ENCODE measurements at regions of chr19 and their contacts with region 1.

Region 1: DNA sequence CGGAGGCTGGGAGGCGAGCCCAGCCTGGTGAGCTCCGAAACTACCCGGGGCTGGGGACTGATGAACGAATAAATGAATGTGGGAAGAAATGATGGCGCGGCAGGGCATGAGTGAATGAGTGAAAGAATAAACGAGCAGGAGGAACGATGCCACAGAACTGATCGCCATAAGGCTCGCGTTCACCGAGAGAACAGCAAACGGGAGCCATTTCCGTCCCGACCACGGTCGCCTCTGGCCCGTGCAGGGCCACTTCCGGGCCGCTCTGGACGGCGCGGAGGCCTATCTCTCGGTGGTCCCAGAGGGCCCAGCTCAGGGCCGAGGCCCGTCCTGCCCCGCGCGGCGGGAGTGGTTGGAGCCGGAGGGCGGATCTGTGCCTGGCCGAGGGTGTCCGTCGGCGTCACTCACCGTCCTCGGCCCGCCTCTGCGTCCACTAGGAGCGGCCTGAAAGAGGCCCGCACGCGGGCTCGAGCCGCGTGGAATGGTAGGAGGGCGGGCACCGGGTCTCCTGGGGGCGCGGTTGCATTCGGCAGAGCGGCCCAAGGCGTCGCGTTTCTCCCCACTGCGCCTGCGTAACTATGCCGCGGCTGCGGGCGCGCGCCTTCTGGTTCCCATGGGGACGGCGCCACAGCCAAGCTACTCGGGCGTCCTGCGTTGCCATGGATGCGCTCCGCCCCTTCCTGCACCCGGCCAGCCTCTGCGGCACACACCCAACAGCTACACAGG is at the start of gene ZNF497:
- H3K4me3 ChIP-seq: peak within 1 kb of the TSS; percentile 96
- H3K27ac ChIP-seq: peak within 1 kb of the TSS; percentile 85
- H3K4me1 ChIP-seq: no peaks in the 10 kb centered on the region
- CTCF ChIP-seq: peak; percentile 78

Region 2: DNA sequence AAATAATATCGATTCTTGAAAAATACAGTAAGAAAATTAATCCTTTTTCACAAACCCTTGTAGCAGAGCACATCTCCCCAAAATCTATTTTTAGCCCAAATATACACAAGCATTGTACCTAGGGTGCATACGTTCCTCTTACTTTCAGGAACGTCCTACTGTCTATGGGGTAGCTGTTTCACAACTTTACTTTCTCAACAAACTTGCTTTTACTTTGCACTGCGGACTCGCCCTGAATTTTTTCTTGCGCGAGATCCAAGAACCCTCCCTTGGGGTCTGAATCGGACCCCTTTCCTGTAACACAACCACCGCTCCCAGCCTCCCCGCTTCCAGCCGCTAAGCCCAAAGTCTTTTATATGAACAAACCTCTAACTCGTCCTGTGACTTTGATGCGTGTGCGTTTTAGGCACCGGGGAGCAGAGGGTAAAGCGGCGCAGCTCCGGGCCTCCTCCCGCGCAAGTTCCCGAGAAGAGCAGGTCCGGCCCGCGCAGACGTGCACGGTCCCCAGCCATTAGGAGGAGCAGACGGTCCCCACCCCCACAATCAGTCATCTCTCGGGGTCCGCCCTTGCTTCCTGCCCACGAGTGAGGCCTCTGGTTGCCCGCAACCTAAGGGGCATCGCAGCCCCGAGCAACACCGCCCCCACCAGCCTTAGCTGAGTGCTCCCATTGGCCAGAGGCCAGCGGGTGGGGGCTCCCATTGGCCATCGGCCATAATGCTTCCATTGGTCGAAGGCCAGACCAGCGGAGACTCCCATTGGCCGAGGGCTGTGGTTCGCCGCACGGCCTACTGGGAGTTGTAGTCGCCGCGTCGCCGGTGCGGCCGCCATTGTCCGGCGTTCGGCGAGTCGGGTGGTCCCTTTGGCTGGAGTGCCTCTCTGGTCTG is 84.0 kb before region 1 on chr19 and contains the start of gene ZNF8:
- CTCF ChIA-PET with region 1: no interaction called
- POLR2A ChIA-PET with region 1: interaction called, 13 read pairs
- H3K4me3 ChIP-seq: peak within 1 kb of the TSS; percentile 87
- H3K27ac ChIP-seq: peak within 1 kb of the TSS; percentile 82
- H3K4me1 ChIP-seq: no peaks in the 10 kb centered on the region
- CTCF ChIP-seq: no peak

Region 3: DNA sequence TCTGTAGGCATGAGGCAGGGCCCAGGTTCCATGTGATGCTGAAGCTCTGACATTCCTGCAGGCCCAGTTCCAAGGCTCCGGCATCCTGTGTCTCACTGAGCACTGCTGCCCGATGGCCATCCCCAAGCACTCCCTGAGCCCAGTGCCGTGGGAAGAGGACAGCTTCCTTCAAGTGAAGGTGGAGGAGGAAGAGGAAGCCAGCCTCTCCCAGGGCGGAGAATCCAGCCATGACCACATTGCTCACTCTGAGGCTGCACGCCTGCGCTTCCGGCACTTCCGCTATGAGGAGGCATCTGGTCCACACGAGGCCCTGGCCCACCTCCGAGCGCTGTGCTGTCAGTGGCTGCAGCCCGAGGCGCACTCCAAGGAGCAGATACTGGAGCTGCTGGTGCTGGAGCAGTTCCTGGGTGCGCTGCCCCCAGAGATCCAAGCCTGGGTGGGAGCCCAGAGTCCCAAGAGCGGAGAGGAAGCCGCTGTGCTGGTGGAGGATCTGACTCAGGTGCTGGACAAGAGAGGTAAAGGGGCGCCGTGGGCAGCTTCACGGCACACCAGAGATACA is 27.7 kb before region 1 on chr19:
- CTCF ChIA-PET with region 1: interaction called, 7 read pairs
- POLR2A ChIA-PET with region 1: interaction called, 14 read pairs
- H3K4me3 ChIP-seq: no peak overlapping the region
- H3K27ac ChIP-seq: no peak overlapping the region
- H3K4me1 ChIP-seq: no peaks in the 10 kb centered on the region
- CTCF ChIP-seq: no peak

Region 4: GRCh38 chr19:58372311-58373133 is 10.1 kb after region 1 on chr19:
- CTCF ChIA-PET with region 1: interaction called, 5 read pairs
- POLR2A ChIA-PET with region 1: interaction called, 35 read pairs
- H3K4me3 ChIP-seq: no peak overlapping the region
- H3K27ac ChIP-seq: no peak overlapping the region
- H3K4me1 ChIP-seq: no peaks in the 10 kb centered on the region
- CTCF ChIP-seq: no peak

Region 5: DNA sequence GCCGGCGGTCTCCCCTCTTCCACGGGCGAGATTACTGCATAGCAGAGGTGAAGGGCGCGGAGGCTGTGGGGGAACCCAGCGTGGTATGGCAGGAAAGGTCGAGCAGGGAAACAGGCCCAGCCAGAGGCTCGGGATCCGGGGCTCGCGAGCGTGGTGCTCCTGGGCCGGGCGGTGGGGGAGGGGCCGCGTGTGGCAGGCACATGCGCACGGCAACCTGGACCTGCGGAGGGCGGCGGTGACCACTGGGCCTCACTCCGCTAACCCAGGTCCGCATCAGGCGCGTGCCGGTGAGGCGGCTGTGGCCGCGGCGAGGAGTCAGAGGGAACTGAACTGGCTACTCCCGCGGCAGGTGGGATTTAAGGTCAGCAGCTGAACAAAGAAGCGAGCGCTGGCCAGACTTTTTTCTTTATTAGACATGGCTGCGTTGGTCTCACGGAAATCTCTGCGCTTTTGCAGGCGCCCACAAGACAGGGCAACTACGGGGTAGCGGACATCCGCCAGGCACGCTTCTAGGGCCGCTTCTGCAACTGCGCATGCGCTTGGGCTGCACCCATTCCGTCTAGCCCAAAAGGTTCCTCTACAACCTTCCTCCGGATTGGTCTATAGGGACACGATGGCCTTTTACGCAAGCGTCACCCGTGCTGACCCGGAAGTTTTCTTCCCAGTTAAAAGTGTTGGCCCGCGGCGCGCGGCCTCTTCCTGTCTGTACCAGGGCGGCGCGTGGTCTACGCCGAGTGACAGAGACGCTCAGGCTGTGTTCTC is 24.3 kb after region 1 on chr19 and contains the start of gene RPS5:
- CTCF ChIA-PET with region 1: no interaction called
- POLR2A ChIA-PET with region 1: interaction called, 28 read pairs
- H3K4me3 ChIP-seq: peak within 1 kb of the TSS; percentile 77
- H3K27ac ChIP-seq: peak within 1 kb of the TSS; percentile 100
- H3K4me1 ChIP-seq: peaks cover 16% of the 10 kb centered on the region
- CTCF ChIP-seq: no peak

Region 6: DNA sequence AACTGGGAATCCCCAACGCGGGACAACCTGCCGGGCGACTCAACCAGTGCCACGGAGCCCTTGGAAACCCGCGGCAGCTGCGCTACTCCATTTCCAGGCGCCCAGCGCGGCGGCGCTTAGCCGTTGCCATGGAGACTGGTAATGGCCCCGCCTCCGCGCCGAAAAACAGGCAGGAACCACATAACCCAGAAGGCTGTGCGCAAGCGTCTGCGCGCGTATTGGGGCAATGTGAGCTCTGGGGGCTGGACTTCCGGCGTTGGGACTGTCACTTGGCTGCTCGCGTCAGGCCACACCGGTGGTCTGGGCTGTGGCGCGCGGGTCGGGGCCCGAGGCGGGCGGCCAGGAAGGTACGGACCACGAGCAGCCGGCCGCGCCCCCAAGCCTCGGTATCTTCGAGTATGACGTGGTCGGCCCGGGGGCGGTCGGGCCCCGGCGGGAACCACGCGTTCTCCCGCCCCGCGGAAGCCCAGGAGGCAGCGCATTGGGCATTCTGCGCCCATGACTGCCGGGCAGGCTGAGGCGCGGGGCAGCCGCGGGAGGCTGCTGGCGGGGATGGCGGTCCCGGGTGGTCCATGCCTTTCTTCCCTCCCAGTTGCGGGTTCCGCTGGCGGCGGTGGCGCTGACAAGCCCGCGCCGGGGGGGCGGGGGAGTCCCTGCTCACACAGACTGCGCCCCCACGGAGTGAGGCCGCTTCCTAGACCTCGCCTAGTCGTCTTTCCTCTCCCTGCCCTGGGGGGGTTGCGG is 89.1 kb after region 1 on chr19 and contains the start of gene ZNF324B:
- CTCF ChIA-PET with region 1: no interaction called
- POLR2A ChIA-PET with region 1: interaction called, 11 read pairs
- H3K4me3 ChIP-seq: peak within 1 kb of the TSS; percentile 93
- H3K27ac ChIP-seq: peak within 1 kb of the TSS; percentile 38; the same call in 1 of the 2 replicates
- H3K4me1 ChIP-seq: peaks cover 7% of the 10 kb centered on the region; the same call in 1 of the 2 replicates
- CTCF ChIP-seq: peak; percentile 67

Region 7: GRCh38 chr19:58529405-58529804 is 167.0 kb after region 1 on chr19:
- CTCF ChIA-PET with region 1: no interaction called
- POLR2A ChIA-PET with region 1: no interaction called
- H3K4me3 ChIP-seq: no peak overlapping the region
- H3K27ac ChIP-seq: no peak overlapping the region
- H3K4me1 ChIP-seq: no peaks in the 10 kb centered on the region
- CTCF ChIP-seq: no peak

Region 8: DNA sequence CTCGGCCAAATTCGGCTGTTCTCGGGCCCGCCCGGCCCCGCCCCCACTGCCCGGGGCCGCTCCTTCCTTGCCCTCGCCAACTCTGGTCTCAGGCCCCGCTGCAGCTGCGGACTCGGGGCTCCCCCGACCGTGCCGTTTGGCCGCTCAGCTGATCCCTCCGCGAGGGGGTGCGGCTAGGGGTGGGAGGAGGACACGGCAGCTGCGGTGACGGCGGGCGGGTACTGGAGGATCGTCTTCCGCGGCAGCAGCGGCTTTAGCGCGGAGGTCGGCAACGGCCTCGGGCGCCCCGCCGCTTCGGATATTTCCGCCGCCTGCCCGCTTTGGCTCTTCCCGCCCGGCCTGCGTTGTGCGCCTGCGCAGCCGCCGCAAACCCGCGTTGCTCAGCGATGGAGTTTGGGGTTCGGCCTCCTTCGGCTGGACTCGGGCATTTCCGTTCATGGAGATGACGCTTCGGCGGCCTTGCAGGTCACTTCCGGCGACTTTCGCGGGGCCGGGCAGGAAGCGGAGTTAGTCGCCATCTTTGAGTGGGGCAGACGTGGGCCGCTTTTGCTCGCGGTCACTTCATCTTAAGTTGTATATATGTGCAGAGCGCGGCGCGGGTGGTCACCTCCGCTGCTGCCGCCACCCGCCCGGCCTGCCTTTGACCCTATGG is 196.3 kb after region 1 on chr19:
- CTCF ChIA-PET with region 1: interaction called, 3 read pairs
- POLR2A ChIA-PET with region 1: interaction called, 22 read pairs
- H3K4me3 ChIP-seq: peak overlapping the region; percentile 89
- H3K27ac ChIP-seq: peak overlapping the region; percentile 99
- H3K4me1 ChIP-seq: peaks cover 17% of the 10 kb centered on the region
- CTCF ChIP-seq: no peak